Adrenal gland (tissue), 19 donors: ENCODE measurements at regions of chr10 and their contacts with region 1.

Region 1: GRCh38 chr10:17742918-17743317 is 9.1 kb upstream of the TMEM236 start:
- DNase-seq: peak; percentile 56 to 86 (median 68)
- H3K4me3 ChIP-seq: no peak overlapping the region
- H3K27ac ChIP-seq: no peak overlapping the region
- H3K4me1 ChIP-seq: peaks cover 0 to 4% of the 10 kb centered on the region in 2 donors
- H3K27me3 ChIP-seq: no peaks in the 10 kb centered on the region
- CTCF ChIP-seq: peak; percentile 77 to 98 (median 92)
- POLR2A ChIP-seq: no peak

Region 2: DNA sequence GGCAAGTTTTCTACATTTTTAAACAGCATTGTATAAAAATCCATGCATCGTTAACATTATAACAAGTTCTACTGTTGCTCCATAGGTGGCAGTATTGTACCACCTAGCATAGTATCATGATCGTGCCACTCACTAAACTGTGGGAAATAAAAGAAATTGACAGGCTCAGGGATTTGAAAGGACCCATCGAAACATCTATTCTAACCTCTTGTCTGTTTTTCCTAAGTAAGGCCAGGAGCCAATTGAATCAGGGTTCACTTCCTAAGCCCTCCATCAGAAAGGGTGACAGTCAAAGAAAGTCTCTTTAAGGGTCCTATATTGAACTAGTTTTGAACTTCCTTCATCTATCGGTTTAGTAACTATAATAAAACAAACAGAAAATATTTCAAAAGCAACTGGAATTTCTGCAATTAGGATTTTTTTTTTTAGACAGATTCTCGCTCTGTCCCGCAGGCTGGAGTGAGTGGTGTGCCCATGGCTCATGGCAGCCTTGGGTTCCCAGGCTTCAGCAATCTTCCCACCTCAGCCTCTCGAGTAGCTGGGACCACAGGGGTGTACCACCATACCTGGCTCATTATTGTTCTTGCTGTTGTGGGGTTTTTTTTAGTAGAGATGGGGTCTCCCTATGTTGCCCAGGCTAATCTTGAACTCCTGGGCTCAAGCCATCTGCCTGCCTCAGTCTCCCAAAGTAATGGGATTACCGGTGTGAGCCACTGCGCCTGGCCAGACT is 135.2 kb before region 1 on chr10:
- intact Hi-C with region 1: loop called (anchors 5 to 10 kb)
- DNase-seq: peak in 1 of 7 donors; percentile 23
- H3K4me3 ChIP-seq: no peak overlapping the region
- H3K27ac ChIP-seq: no peak overlapping the region
- H3K4me1 ChIP-seq: no peaks in the 10 kb centered on the region
- H3K27me3 ChIP-seq: no peaks in the 10 kb centered on the region
- CTCF ChIP-seq: peak; percentile 80 to 95 (median 88)
- POLR2A ChIP-seq: no peak

Region 3: DNA sequence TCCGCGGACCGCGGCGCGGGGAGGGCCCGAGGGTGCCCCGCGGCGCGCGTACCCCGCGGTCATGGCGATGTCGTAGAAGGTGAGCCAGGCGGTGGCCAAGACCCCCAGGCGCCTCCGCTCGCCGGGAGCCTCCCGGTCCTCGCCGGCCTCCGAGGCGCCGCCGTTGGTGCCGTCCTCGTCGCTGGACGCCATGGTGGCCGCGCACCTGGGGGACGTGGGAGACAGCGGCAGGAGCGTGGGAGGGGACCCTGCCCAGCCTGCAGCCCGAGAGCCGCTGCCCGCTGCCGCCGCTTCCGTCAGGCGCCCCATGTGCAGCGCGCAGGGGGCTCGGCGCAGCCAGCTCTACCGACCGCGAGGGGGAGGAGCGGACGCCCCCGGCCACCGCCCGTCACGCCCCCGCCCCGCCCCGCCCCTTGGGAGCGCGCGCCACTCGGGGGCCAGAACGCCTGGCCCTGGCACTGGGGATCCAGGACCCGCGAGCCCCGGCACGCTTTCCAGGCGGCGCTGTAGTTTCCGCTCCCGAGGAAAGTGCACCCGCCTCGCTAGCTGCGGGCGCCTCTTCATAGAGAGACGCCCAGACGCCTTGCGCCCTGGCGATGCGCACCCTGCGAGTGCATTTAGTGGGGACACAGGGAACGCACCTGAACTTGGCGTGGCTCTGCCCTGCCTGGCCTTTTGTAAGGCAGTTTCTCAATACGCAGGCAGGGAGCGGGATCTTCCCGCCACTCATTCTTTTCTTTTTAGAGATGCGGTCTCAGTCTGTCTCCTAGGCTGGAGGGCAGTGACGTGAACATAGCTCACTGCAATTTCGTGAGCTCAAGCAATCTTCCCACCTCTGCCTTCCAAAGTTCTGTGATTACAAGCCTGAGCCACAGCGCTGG is 125.6 kb before region 1 on chr10 and contains the start of gene HACD1:
- intact Hi-C with region 1: loop called in 1 of 2 experiments (anchors 10 kb)
- DNase-seq: peak; percentile 45 to 77 (median 61)
- H3K4me3 ChIP-seq: peak within 1 kb of the TSS; percentile 40 to 86 (median 70)
- H3K27ac ChIP-seq: peak within 1 kb of the TSS; percentile 53 to 87 (median 76)
- H3K4me1 ChIP-seq: peaks cover 0 to 9% of the 10 kb centered on the region in 2 donors
- H3K27me3 ChIP-seq: no peaks in the 10 kb centered on the region
- CTCF ChIP-seq: peak in 1 of 6 experiments; percentile 8
- POLR2A ChIP-seq: peak in 1 of 2 donors; percentile 28
- total RNA-seq, gene HACD1: 1.4 to 23.1 (median 17.0) TPM

Region 4: GRCh38 chr10:17820943-17821342 is 78.0 kb after region 1 on chr10:
- intact Hi-C with region 1: no loop called
- DNase-seq: no peak
- H3K4me3 ChIP-seq: no peak overlapping the region
- H3K27ac ChIP-seq: no peak overlapping the region
- H3K4me1 ChIP-seq: no peaks in the 10 kb centered on the region
- H3K27me3 ChIP-seq: no peaks in the 10 kb centered on the region
- CTCF ChIP-seq: no peak
- POLR2A ChIP-seq: no peak